ENCODE measurements at regions of chr17 and their contacts with region 1.

Region 1: GRCh38 chr17:72778169-72779151 is 314.0 kb downstream of the SLC39A11 start:
- DNase-seq: no peak
- H3K4me3 ChIP-seq: no peak overlapping the region
- H3K27ac ChIP-seq: no peak overlapping the region
- H3K27me3 ChIP-seq: no peaks in the 10 kb centered on the region
- CTCF ChIP-seq: no peak

Region 2: GRCh38 chr17:73226556-73227172 is 448.2 kb after region 1 on chr17:
- CTCF ChIA-PET with region 1: interaction called, 10 read pairs
- POLR2A ChIA-PET with region 1: no interaction called
- DNase-seq: no peak
- H3K4me3 ChIP-seq: peak overlapping the region; percentile 39
- H3K27ac ChIP-seq: peak overlapping the region; percentile 65
- H3K27me3 ChIP-seq: no peaks in the 10 kb centered on the region
- CTCF ChIP-seq: no peak

Measured in AG04450 (cell line).